ENCODE measurements at regions of chr21 and their contacts with region 1.

Region 1: DNA sequence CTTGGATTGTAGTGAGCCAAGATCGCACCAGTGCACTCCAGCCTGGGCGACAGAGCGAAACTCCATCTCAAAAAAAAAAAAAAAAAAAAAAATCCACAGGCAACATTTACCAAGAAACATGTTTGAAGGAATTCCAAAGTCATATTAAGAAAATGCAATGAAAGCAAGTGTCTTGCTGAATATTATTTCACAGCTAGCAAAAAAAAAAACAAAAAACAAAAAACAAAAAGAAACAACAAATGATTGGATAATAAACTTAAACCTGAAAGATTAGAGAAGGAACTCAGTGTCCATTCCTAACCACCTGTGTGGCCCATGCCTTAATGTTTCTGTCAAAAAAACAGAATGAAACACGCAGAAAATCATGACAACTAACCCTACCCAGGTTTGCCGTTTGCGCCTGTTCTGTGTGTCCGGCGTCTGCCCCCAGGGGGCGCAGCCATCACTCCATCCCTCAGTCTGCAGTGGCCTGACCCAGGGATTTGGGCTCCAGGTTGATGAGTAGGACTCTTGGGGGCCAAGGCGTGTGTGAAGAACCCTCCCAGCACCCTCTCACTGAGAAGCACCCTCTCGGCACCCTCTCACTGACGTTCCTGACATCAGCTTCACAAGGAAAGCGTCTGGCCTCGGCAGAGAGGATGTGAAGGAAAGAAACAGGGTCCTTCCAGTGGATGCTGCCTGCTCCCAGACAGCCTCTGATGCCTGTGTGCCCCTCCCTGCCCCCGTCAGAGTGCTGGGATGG is 19.2 kb upstream of the PTTG1IP start:
- DNase-seq: no peak
- H3K4me3 ChIP-seq: no peak overlapping the region
- CTCF ChIP-seq: peak; percentile 84

Region 2: DNA sequence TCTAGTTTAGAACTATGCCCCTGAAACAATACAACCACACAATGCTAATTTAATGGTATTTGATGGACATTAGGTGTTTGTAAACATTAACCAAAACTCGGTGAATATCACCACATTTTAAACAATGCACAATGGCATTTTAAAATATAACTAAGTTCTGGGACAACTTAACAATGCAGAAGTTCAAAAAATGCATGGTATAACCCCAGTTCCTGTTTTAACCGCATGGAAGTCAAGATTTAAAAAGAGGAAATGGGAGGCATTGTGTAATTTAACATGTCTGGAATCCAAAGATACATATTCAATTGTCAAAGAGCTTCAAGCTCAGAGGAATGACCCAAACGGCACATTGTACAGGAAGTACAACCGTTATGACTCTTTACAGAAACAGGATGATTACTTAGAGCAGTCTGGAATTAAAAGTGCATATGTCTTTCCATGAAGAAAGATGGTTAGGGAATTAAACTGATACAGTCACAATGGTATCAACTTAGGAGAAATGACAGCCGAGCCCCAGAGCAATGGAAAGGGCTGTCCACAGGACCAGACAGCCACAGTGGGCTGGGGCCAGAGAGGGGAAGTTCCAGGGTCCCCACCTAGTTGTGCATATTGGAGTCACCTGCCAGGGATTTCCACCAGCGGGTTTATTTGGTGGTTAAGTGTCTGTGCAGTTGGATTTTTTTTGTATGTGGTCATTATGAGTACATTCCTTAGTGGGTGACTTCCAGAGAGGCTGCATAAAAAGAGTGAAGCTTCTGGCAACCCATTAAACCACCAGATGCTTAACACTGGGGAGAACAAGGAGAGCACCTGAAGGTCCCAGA is 11.7 kb before region 1 on chr21:
- CTCF ChIA-PET with region 1: interaction called, 58 read pairs
- POLR2A ChIA-PET with region 1: no interaction called
- DNase-seq: no peak
- H3K4me3 ChIP-seq: no peak overlapping the region
- CTCF ChIP-seq: no peak

Region 3: DNA sequence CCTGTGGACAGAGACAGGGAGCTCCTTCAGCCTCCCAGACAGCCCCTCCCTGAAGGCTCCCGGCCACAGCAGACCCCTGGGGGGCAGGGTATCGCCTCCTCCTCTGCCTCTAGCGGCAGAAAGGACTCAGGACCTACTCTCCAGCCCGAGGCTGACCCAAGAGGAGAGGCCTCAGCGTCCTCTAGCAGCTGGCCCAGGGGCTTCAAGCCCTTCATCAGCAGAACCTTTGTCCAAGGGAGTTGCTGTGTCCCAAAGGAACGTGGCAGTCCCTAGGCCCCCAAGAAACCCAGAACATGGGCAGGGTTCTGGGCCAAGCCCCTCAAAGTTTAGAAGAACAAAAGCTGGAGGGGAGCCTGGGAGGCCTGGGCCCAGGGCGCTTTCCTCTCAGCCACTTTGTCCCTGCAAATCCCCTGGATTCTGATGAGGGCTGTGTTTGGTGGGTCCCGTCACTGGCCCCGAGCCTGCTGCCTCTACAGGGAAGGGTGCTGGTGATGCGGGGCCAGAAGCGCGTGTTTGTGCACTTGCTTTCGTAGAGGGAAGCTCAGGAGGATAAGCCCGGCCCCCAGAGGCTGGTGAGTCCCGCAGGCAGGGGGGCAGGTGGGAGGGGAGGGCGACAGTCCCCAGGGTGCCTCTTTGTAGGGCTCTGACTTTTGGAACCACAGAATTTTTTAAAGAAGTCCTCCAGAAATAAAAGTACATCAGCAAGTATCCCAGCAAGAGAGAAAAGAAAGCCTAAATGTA is 14.7 kb after region 1 on chr21:
- CTCF ChIA-PET with region 1: interaction called, 11 read pairs
- POLR2A ChIA-PET with region 1: no interaction called
- DNase-seq: no peak
- H3K4me3 ChIP-seq: no peak overlapping the region
- CTCF ChIP-seq: no peak

Region 4: GRCh38 chr21:44927587-44928461 is 35.1 kb after region 1 on chr21:
- CTCF ChIA-PET with region 1: interaction called, 15 read pairs
- POLR2A ChIA-PET with region 1: no interaction called
- DNase-seq: no peak
- H3K4me3 ChIP-seq: no peak overlapping the region; the same call in 1 of the 2 replicates
- CTCF ChIP-seq: peak; percentile 18